ENCODE measurements at regions of chr7 and their contacts with region 1.

Region 1: DNA sequence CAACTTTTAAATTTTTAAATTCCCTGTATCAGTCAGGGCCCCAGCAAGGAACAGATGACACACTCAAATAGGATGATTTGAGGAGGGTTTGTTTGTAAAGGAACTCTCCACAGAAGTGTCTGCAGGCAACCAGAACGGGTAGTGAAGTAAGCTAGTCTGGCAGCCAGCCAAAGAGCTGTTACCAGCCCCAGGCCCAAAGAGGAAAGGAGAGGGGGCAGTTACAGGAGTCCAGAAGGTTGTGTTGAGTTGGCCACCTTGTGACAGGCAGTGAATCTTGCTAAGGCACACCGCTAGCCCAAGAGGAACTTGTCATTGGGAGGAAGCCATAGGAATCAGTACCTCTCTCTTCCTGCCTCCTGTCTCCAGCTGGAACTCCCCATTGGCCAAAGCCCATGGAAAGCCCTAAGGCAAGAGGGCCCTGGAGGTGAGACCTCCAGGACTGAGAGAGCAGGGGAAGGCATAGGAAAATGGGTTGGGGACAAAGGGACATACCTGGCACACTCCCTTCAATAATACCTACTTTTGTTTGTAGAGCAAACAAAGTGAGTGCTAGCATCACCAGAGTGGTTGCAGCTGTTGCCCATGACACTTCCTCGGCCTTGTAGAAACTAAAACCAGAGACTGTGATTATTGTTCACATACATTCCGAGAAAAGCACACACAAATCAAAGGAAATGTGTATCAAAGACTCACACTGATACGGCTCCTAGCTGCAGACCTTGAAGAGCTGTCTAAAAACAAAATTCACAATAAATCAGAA is 25.4 kb upstream of the GATAD1 start:
- DNase-seq: no peak
- H3K4me3 ChIP-seq: no peak overlapping the region
- H3K27ac ChIP-seq: no peak overlapping the region
- H3K27me3 ChIP-seq: peaks cover 0 to 7% (median 0%) of the 10 kb centered on the region in 45 donors
- CTCF ChIP-seq: no peak

Region 2: GRCh38 chr7:92108821-92109220 is 313.0 kb before region 1 on chr7:
- intact Hi-C with region 1: no loop called
- DNase-seq: no peak
- H3K4me3 ChIP-seq: no peak overlapping the region
- H3K27ac ChIP-seq: no peak overlapping the region
- H3K27me3 ChIP-seq: no peaks in the 10 kb centered on the region
- CTCF ChIP-seq: no peak

Region 3: GRCh38 chr7:92359801-92360200 is 62.1 kb before region 1 on chr7:
- intact Hi-C with region 1: loop called in 1 of 2 experiments (anchors 10 kb)
- DNase-seq: no peak
- H3K4me3 ChIP-seq: no peak overlapping the region
- H3K27ac ChIP-seq: peak overlapping the region in 36 of 59 donors; percentile 1 to 93 (median 55)
- H3K27me3 ChIP-seq: no peaks in the 10 kb centered on the region
- CTCF ChIP-seq: no peak